ENCODE measurements at regions of chr5 and their contacts with region 1.

Region 1: DNA sequence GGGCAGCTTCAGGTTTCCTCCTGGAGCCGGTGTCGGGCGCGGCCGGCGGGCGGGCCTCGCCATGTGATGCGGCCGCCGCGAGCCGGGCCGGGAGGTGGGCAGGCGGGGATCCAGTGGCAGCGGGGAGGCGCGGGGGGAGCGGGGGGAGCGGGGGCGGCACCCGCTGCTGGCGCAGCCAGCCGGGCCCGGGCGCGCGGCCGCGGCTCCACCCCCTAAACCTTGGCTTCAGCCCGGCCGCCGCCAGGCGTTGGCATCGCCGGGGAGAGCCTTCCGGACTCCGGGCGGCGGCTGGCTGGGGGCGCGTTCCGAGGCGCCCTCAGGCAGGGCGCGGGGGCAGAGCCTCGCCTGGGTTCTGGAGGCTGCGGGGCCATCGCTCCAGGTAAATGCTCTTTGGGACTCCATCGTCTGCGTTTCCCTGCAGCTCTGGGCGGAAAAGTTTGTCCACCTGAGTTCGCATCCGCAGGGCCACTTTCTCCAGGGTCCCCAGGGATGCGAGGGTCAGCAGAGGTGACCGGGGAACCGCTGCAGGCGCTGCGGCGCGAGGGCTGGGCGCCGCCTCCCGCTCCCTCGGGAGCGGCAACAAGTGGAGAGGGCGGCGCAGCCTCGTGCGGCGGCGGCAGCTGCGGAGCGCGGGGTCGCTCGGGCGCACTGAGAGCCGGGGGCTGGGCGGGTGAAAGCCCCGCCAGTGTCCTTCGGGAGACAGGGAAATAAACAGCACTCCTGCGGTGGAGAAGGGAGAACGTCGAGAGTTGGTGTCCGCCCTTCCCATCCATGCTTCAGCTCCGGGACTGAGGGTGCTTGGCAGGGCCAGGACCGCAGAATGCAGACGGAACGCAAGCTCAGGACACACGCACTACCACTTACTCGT is at the start of gene ARHGEF28:
- DNase-seq: peak; percentile 19 to 84
- H3K4me3 ChIP-seq: peak within 1 kb of the TSS; percentile 81 to 95
- H3K27ac ChIP-seq: peak within 1 kb of the TSS; percentile 91
- H3K4me1 ChIP-seq: peaks cover 0 to 7% of the 10 kb centered on the region in 2 donors
- H3K27me3 ChIP-seq: no peaks in the 10 kb centered on the region
- CTCF ChIP-seq: no peak
- total RNA-seq, gene ARHGEF28: 15.1 TPM

Region 2: GRCh38 chr5:73673161-73673591 is 47.0 kb after region 1 on chr5:
- intact Hi-C with region 1: loop called (anchors 5 kb)
- DNase-seq: no peak
- H3K4me3 ChIP-seq: no peak overlapping the region
- H3K27ac ChIP-seq: peak overlapping the region; percentile 75 to 77
- H3K4me1 ChIP-seq: peaks cover 0 to 30% of the 10 kb centered on the region in 2 donors
- H3K27me3 ChIP-seq: no peaks in the 10 kb centered on the region
- CTCF ChIP-seq: no peak

Region 3: GRCh38 chr5:73748510-73749400 is 122.6 kb after region 1 on chr5:
- intact Hi-C with region 1: loop called (anchors 5 kb)
- DNase-seq: no peak
- H3K4me3 ChIP-seq: peak overlapping the region; percentile 16 to 36
- H3K27ac ChIP-seq: peak overlapping the region; percentile 72 to 77
- H3K4me1 ChIP-seq: peaks cover 9 to 33% of the 10 kb centered on the region in 2 donors
- H3K27me3 ChIP-seq: no peaks in the 10 kb centered on the region
- CTCF ChIP-seq: no peak

Measured in ascending aorta (tissue), 2 donors.